CD8-positive, alpha-beta T cell (primary cell): ENCODE measurements at regions of chr9 and their contacts with region 1.

Region 1: DNA sequence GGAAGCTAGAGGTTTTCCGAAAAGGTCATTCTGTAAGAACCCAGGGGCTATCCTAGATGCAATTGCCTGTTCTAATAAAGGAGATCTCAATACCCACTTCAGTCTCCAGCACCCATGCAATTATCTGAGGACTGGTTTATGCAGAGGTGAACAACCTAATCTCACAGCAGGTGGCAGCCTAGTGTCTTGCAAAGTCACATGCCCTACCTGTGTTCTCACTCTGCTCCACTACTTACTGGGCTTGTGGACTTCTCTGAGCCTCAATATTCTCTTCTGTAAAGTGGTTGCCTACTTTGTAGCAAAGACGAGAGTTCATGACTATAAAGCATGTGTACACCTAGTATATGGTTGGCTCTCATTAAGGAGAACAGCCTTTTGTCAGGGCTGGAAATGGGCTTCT is 21.0 kb upstream of the ALDH1B1 start:
- DNase-seq: peak in 3 of 9 experiments; percentile 15 to 53 (median 45)
- ATAC-seq: no peak
- H3K4me3 ChIP-seq: no peak overlapping the region
- H3K4me3 Mint-ChIP-seq: no peak overlapping the region
- H3K27ac ChIP-seq: no peak overlapping the region
- H3K27ac Mint-ChIP-seq: no peak overlapping the region
- H3K4me1 ChIP-seq: no peaks in the 10 kb centered on the region
- H3K4me1 Mint-ChIP-seq: no peaks in the 10 kb centered on the region
- H3K27me3 ChIP-seq: no peaks in the 10 kb centered on the region
- H3K27me3 Mint-ChIP-seq: peaks cover 16% of the 10 kb centered on the region
- CTCF ChIP-seq: no peak

Region 2: DNA sequence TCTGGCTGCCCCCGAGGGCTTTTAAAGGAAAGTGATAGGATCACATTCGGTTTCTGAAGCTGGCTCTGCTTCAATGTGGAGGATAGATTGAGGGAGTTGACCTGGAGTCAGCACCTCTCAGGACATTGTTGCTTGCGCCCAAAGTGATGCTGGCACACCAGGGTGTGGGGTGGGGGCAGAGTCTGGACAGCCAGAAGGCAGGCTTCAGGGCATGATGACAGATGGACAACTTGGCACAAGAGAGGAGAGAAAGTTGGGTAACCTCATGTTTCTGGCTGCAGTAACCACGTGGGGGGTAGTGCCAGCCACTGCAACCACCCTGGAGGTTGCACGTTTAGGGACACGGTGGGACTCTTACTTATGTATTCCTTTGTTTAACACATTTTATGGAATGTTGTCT is 30.5 kb after region 1 on chr9:
- CTCF ChIA-PET with region 1: no interaction called
- POLR2A ChIA-PET with region 1: no interaction called
- intact Hi-C with region 1: loop called in 1 of 2 experiments (anchors 2 kb)
- DNase-seq: no peak
- ATAC-seq: no peak
- H3K4me3 ChIP-seq: no peak overlapping the region
- H3K4me3 Mint-ChIP-seq: no peak overlapping the region
- H3K27ac ChIP-seq: no peak overlapping the region
- H3K27ac Mint-ChIP-seq: no peak overlapping the region
- H3K4me1 ChIP-seq: no peaks in the 10 kb centered on the region
- H3K4me1 Mint-ChIP-seq: no peaks in the 10 kb centered on the region
- H3K27me3 ChIP-seq: no peaks in the 10 kb centered on the region
- H3K27me3 Mint-ChIP-seq: peaks cover 21% of the 10 kb centered on the region
- CTCF ChIP-seq: no peak

Region 3: GRCh38 chr9:38432922-38433510 is 61.5 kb after region 1 on chr9:
- CTCF ChIA-PET with region 1: no interaction called
- POLR2A ChIA-PET with region 1: no interaction called
- intact Hi-C with region 1: loop called in 1 of 2 experiments (anchors 2 kb)
- DNase-seq: peak in 2 of 9 experiments; percentile 37 to 51
- ATAC-seq: no peak
- H3K4me3 ChIP-seq: no peak overlapping the region
- H3K4me3 Mint-ChIP-seq: no peak overlapping the region
- H3K27ac ChIP-seq: no peak overlapping the region
- H3K27ac Mint-ChIP-seq: no peak overlapping the region
- H3K4me1 ChIP-seq: no peaks in the 10 kb centered on the region
- H3K4me1 Mint-ChIP-seq: peaks cover 6% of the 10 kb centered on the region
- H3K27me3 ChIP-seq: peaks cover 0 to 2% of the 10 kb centered on the region in 2 experiments
- H3K27me3 Mint-ChIP-seq: peaks cover 5% of the 10 kb centered on the region
- CTCF ChIP-seq: peak; percentile 63

Region 4: GRCh38 chr9:38671748-38672147 is 300.3 kb after region 1 on chr9:
- CTCF ChIA-PET with region 1: no interaction called
- POLR2A ChIA-PET with region 1: no interaction called
- intact Hi-C with region 1: loop called in 1 of 2 experiments (anchors 10 kb)
- DNase-seq: no peak
- ATAC-seq: no peak
- H3K4me3 ChIP-seq: no peak overlapping the region
- H3K4me3 Mint-ChIP-seq: no peak overlapping the region
- H3K27ac ChIP-seq: no peak overlapping the region
- H3K27ac Mint-ChIP-seq: no peak overlapping the region
- H3K4me1 ChIP-seq: peaks cover 4% of the 10 kb centered on the region
- H3K4me1 Mint-ChIP-seq: peaks cover 3% of the 10 kb centered on the region
- H3K27me3 ChIP-seq: no peaks in the 10 kb centered on the region
- H3K27me3 Mint-ChIP-seq: peaks cover 6% of the 10 kb centered on the region
- CTCF ChIP-seq: no peak